ENCODE measurements at regions of chr9 and their contacts with region 1.

Region 1: DNA sequence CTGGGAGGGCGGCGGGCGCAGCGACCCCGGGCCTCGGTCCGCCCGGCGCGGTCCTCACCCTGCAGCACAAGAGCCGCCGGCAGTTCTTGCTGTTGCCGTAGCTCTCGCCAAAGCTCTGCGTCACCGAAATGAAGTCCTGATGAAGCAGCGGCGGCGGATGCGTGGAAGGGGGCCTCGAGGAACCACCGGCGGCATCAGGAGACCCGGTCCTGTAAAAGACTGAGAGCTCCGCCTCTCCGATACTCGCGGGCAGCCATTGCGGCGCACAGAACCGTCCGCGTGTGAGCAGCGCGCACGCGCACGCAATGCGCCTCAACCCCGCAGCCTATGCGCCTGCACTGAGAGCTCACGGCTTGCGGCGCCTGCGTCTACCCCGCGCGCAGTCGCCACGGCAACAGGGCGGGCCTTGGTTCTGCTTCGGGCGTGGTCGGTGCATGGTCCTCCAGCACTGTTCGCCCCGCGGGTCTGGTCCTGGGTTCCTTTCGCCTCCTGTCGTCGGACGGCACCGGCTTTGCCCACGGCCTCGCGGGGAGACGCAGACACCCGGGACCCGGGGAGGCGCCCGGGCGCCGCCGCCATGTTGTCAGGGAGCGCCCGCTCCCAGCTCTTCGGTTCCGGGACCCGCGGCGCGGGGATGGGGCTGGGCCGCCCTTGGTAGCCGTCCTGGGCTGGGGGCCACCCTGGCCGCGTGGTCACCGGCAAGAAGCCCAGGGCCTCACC is 9.3 kb upstream of the GRIN1 start:
- DNase-seq: peak; percentile 91
- H3K4me3 ChIP-seq: peak overlapping the region; percentile 57 to 82 (median 62)
- H3K27ac ChIP-seq: peak overlapping the region; percentile 71 to 82 (median 75)
- H3K4me1 ChIP-seq: peaks cover 10 to 35% (median 29%) of the 10 kb centered on the region in 4 donors
- H3K27me3 ChIP-seq: peaks cover 31% of the 10 kb centered on the region
- CTCF ChIP-seq: peak in 1 of 5 experiments; percentile 15
- EP300 ChIP-seq: no peak
- POLR2A ChIP-seq: peak; percentile 39

Region 2: DNA sequence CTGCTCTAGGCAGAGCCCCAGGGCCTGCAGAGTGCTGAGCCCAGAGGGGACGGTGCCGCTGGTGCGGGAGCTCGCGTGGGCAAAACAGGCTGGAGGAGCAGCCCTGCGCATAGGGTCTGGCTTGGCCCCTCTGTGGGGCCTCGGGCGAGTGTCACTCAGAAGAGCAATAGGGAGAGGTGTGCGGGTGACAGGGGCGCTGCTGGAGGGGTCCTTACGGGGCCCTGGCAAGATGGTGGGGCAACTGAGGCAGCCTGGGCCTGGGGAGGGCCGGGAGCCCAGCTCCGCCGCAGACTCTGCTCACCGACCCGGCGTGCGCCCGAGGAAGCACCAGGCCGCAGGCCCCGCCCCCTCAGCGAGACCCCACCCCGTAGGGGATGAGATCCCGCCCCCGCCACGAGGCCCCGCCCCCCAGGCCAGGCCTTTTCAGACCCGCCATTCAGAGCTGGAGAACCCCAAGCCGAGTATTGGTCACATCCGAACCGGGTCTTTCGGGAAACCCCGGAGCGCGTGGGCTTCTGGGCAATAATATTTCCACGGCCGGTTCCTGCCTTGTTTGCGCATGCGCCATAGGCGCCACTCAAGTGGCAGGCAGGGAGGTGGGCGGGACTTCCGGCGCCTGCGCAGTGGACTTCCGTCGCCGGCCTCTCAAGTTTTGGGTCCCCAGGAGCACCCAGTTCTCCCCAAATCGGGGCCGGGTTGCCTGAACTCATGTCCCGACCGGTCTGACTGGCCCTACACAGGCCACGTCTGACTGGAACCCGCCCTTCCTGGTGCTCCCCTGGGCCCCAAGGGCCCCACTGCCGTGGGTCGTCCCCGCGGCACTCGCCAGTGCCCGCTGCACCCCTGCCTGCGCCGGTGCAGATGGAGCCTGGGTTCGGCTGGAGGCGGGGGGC is 93.7 kb after region 1 on chr9:
- in situ Hi-C with region 1: loop called in 2 of 4 experiments (anchors 10 to 25 kb)
- intact Hi-C with region 1: loop called (anchors 5 kb)
- DNase-seq: peak; percentile 97
- H3K4me3 ChIP-seq: peak overlapping the region; percentile 56 to 98 (median 70)
- H3K27ac ChIP-seq: peak overlapping the region; percentile 91 to 96 (median 92)
- H3K4me1 ChIP-seq: peaks cover 18 to 49% (median 39%) of the 10 kb centered on the region in 4 donors
- H3K27me3 ChIP-seq: peaks cover 4% of the 10 kb centered on the region
- CTCF ChIP-seq: no peak
- EP300 ChIP-seq: no peak
- POLR2A ChIP-seq: peak; percentile 63

Region 3: DNA sequence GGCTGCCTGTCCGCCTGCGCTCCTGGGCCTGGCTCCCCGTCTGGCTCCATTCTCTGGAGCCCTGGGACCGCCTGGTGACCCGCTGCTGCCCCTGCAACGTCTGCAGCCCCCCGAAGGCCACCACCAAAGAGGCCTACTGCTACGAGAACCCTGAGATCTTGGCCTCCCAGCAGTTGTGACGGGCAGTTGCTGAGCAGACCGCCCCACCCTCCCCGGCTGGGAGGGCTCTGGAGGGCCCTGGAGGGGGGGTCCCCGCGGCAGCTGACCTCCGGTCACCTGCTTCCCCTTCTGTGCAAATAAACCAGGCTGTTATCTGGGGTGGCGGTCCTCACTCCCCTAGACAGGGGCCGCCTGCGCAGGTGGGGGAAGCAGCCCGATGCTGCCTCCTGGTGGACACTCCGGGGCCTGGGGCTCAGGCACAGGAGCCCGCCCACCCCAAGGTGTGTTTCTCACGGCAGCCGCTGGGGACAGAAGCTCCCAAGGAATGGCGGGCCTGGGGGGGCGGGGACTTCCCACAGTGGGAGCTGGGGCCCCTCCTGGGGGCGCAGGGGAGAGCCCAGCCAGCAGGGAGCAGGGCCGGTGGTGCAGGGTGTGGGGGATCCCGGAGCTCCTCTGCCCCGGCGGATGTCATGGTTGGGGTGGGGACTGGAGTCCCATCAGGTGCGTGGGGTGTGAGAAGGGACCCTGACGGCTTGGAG is 106.8 kb after region 1 on chr9:
- in situ Hi-C with region 1: loop called in 1 of 4 experiments (anchors 10 kb)
- intact Hi-C with region 1: no loop called
- DNase-seq: peak; percentile 93
- H3K4me3 ChIP-seq: peak overlapping the region in 1 of 4 donors; percentile 26
- H3K27ac ChIP-seq: peak overlapping the region in 3 of 4 donors; percentile 99 to 100 (median 99)
- H3K4me1 ChIP-seq: peaks cover 34 to 52% (median 44%) of the 10 kb centered on the region in 4 donors
- H3K27me3 ChIP-seq: peaks cover 37% of the 10 kb centered on the region
- CTCF ChIP-seq: peak; percentile 99 to 100 (median 100)
- EP300 ChIP-seq: no peak
- POLR2A ChIP-seq: no peak